ENCODE measurements at regions of chr2 and their contacts with region 1.

Region 1: GRCh38 chr2:234488913-234489451 is 7.9 kb downstream of the ARL4C start:
- DNase-seq: peak; percentile 81 to 94 (median 84)
- H3K4me3 ChIP-seq: peak overlapping the region in 1 of 2 donors; percentile 25
- H3K4me3 Mint-ChIP-seq: peak overlapping the region; percentile 84 to 100 (median 98)
- H3K27ac ChIP-seq: peak overlapping the region; percentile 98
- H3K27ac Mint-ChIP-seq: peak overlapping the region; percentile 97 to 100 (median 99)
- H3K4me1 ChIP-seq: peaks cover 87% of the 10 kb centered on the region
- H3K4me1 Mint-ChIP-seq: peaks cover 63 to 94% (median 81%) of the 10 kb centered on the region in 4 donors
- H3K27me3 ChIP-seq: no peaks in the 10 kb centered on the region
- H3K27me3 Mint-ChIP-seq: no peaks in the 10 kb centered on the region

Region 2: DNA sequence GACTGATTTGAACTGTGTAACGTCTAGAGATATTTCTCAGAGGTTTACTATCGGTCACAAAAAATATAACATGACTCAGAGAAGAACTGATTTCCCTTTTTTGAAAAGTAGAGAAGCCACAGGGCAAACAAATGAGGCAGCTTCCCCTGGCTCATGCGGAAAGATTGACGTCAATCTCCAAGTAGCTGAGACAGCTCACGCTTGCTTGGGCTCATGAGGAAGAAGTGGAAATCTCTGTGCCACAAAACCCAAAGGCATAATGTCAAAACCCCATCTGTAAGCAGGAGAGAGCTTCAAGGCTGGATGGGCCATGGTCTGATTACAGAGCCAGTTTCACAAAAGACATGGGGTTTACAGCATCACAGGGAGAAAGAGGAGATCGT is 180.2 kb before region 1 on chr2:
- CTCF ChIA-PET with region 1: no interaction called
- POLR2A ChIA-PET with region 1: interaction called, 12 read pairs
- intact Hi-C with region 1: no loop called
- DNase-seq: peak; percentile 77 to 92 (median 83)
- H3K4me3 ChIP-seq: no peak overlapping the region
- H3K4me3 Mint-ChIP-seq: peak overlapping the region in 7 of 8 donors; percentile 56 to 91 (median 76)
- H3K27ac ChIP-seq: peak overlapping the region; percentile 56
- H3K27ac Mint-ChIP-seq: peak overlapping the region; percentile 86 to 99 (median 98)
- H3K4me1 ChIP-seq: peaks cover 32% of the 10 kb centered on the region
- H3K4me1 Mint-ChIP-seq: peaks cover 36 to 53% (median 43%) of the 10 kb centered on the region in 4 donors
- H3K27me3 ChIP-seq: no peaks in the 10 kb centered on the region
- H3K27me3 Mint-ChIP-seq: no peaks in the 10 kb centered on the region

Region 3: DNA sequence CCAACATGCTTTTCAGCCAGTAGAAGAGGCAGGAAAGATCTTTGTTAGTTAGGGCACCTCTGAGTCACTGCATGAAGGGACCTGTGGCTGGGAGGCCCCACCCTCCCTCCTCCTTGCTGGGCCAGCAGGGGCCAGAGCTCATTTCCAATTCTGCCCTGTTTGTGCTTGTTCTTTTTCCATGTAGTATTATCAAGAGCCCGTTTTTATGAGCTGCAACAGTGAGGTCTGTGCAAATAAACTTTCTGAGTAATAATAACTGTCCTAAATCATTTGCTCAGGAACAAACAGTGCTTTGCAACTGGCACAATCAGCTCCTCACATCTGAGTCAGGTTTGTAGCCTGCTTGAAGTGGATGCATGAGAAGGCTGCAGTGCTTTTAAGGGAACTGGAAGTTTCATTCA is 120.1 kb before region 1 on chr2:
- CTCF ChIA-PET with region 1: interaction called, 4 read pairs
- POLR2A ChIA-PET with region 1: interaction called, 8 read pairs
- intact Hi-C with region 1: loop called (anchors 2 kb)
- DNase-seq: peak; percentile 31 to 70 (median 37)
- H3K4me3 ChIP-seq: no peak overlapping the region
- H3K4me3 Mint-ChIP-seq: peak overlapping the region in 4 of 8 donors; percentile 60 to 77 (median 61)
- H3K27ac ChIP-seq: peak overlapping the region; percentile 33
- H3K27ac Mint-ChIP-seq: peak overlapping the region; percentile 82 to 96 (median 93)
- H3K4me1 ChIP-seq: peaks cover 78% of the 10 kb centered on the region
- H3K4me1 Mint-ChIP-seq: peaks cover 50 to 79% (median 64%) of the 10 kb centered on the region in 4 donors
- H3K27me3 ChIP-seq: no peaks in the 10 kb centered on the region
- H3K27me3 Mint-ChIP-seq: no peaks in the 10 kb centered on the region

Region 4: GRCh38 chr2:234437642-234438304 is 51.2 kb before region 1 on chr2:
- CTCF ChIA-PET with region 1: interaction called, 11 read pairs
- POLR2A ChIA-PET with region 1: interaction called, 10 read pairs
- intact Hi-C with region 1: no loop called
- DNase-seq: no peak
- H3K4me3 ChIP-seq: no peak overlapping the region
- H3K4me3 Mint-ChIP-seq: peak overlapping the region in 3 of 8 donors; percentile 6 to 43 (median 22)
- H3K27ac ChIP-seq: no peak overlapping the region
- H3K27ac Mint-ChIP-seq: peak overlapping the region in 2 of 7 donors; percentile 68 to 88
- H3K4me1 ChIP-seq: peaks cover 72% of the 10 kb centered on the region
- H3K4me1 Mint-ChIP-seq: peaks cover 46 to 88% (median 65%) of the 10 kb centered on the region in 4 donors
- H3K27me3 ChIP-seq: no peaks in the 10 kb centered on the region
- H3K27me3 Mint-ChIP-seq: no peaks in the 10 kb centered on the region

Region 5: DNA sequence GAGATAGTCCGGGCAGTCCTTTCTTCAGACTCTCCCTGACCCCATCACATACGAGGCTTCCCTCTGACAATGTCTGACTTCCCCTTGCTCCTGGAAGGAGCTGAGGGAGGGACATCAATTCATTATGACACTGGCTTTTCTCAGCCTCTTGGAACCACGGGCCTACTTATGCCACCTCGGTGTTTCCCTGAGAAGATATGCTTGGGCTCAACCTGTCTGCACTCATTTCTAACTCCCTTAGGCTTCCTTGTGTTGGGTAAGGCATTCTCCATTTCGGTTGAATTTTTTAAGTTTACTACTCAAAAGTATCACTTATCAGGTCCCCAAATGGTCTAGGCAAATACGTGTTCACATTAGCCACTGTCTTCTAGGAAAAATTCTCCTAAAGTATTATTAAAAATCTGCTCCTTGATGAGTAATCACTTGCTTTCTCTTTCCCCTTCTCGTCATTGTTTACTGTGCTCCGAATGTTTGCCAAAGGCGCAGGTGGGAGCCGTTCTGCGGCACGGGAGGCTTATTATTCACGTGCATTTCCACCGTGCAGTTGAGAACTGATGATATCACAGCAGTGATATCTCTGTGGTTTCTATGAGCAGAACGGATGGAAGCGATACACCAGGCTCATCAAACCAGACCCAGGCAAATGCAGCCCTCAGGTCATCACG is 25.2 kb before region 1 on chr2:
- CTCF ChIA-PET with region 1: interaction called, 17 read pairs
- POLR2A ChIA-PET with region 1: interaction called, 859 read pairs
- intact Hi-C with region 1: loop called (anchors 1 kb)
- DNase-seq: peak; percentile 83 to 90 (median 87)
- H3K4me3 ChIP-seq: peak overlapping the region; percentile 12 to 48
- H3K4me3 Mint-ChIP-seq: peak overlapping the region; percentile 69 to 86 (median 81)
- H3K27ac ChIP-seq: peak overlapping the region; percentile 86
- H3K27ac Mint-ChIP-seq: peak overlapping the region; percentile 88 to 99 (median 97)
- H3K4me1 ChIP-seq: peaks cover 81% of the 10 kb centered on the region
- H3K4me1 Mint-ChIP-seq: peaks cover 49 to 94% (median 73%) of the 10 kb centered on the region in 4 donors
- H3K27me3 ChIP-seq: no peaks in the 10 kb centered on the region
- H3K27me3 Mint-ChIP-seq: no peaks in the 10 kb centered on the region

Region 6: GRCh38 chr2:235614900-235615712 is 1126.1 kb after region 1 on chr2:
- CTCF ChIA-PET with region 1: no interaction called
- POLR2A ChIA-PET with region 1: no interaction called
- intact Hi-C with region 1: no loop called
- DNase-seq: no peak
- H3K4me3 ChIP-seq: no peak overlapping the region
- H3K4me3 Mint-ChIP-seq: no peak overlapping the region
- H3K27ac ChIP-seq: no peak overlapping the region
- H3K27ac Mint-ChIP-seq: peak overlapping the region in 1 of 7 donors; percentile 43
- H3K4me1 ChIP-seq: no peaks in the 10 kb centered on the region
- H3K4me1 Mint-ChIP-seq: peaks cover 0 to 2% (median 0%) of the 10 kb centered on the region in 4 donors
- H3K27me3 ChIP-seq: no peaks in the 10 kb centered on the region
- H3K27me3 Mint-ChIP-seq: peaks cover 7 to 11% of the 10 kb centered on the region in 2 donors

Measured in CD4-positive, alpha-beta memory T cell (primary cell).